Endothelial cell of umbilical vein (primary cell): ENCODE measurements at regions of chr3 and their contacts with region 1.

Region 1: GRCh38 chr3:57060089-57060829 is at the start of gene SPATA12:
- DNase-seq: peak; percentile 95
- H3K4me3 ChIP-seq: no peak within 1 kb of the TSS
- H3K27ac ChIP-seq: peak within 1 kb of the TSS; percentile 25
- H3K4me1 ChIP-seq: peaks cover 23% of the 10 kb centered on the region
- H3K27me3 ChIP-seq: no peaks in the 10 kb centered on the region
- CTCF ChIP-seq: no peak
- POLR2A ChIP-seq: no peak
- total RNA-seq, gene SPATA12: 0.14 TPM in 1 of 2 replicates, not detected in the other

Region 2: GRCh38 chr3:56682462-56683121 is 377.7 kb before region 1 on chr3:
- CTCF ChIA-PET with region 1: no interaction called
- POLR2A ChIA-PET with region 1: no interaction called
- dilution Hi-C with region 1: no loop called
- intact Hi-C with region 1: no loop called
- DNase-seq: peak; percentile 76
- H3K4me3 ChIP-seq: peak overlapping the region; percentile 40 to 85 (median 76)
- H3K27ac ChIP-seq: peak overlapping the region; percentile 82
- H3K4me1 ChIP-seq: peaks cover 14% of the 10 kb centered on the region
- H3K27me3 ChIP-seq: no peaks in the 10 kb centered on the region
- CTCF ChIP-seq: peak in 1 of 2 donors; percentile 9
- POLR2A ChIP-seq: peak; percentile 86

Region 3: GRCh38 chr3:56702490-56703315 is 357.6 kb before region 1 on chr3:
- CTCF ChIA-PET with region 1: no interaction called
- POLR2A ChIA-PET with region 1: no interaction called
- dilution Hi-C with region 1: no loop called
- intact Hi-C with region 1: no loop called
- DNase-seq: peak; percentile 66
- H3K4me3 ChIP-seq: no peak overlapping the region
- H3K27ac ChIP-seq: no peak overlapping the region
- H3K4me1 ChIP-seq: no peaks in the 10 kb centered on the region
- H3K27me3 ChIP-seq: no peaks in the 10 kb centered on the region
- CTCF ChIP-seq: peak; percentile 56 to 61
- POLR2A ChIP-seq: no peak

Region 4: GRCh38 chr3:57007513-57008460 is 52.5 kb before region 1 on chr3:
- CTCF ChIA-PET with region 1: interaction called, 4 read pairs
- POLR2A ChIA-PET with region 1: no interaction called
- dilution Hi-C with region 1: no loop called
- intact Hi-C with region 1: loop called (anchors 5 kb)
- DNase-seq: peak; percentile 77
- H3K4me3 ChIP-seq: no peak overlapping the region
- H3K27ac ChIP-seq: peak overlapping the region; percentile 9
- H3K4me1 ChIP-seq: peaks cover 16% of the 10 kb centered on the region
- H3K27me3 ChIP-seq: no peaks in the 10 kb centered on the region
- CTCF ChIP-seq: no peak
- POLR2A ChIP-seq: no peak

Region 5: GRCh38 chr3:57078344-57078634 is 18.0 kb after region 1 on chr3:
- CTCF ChIA-PET with region 1: interaction called, 9 read pairs
- POLR2A ChIA-PET with region 1: interaction called, 3 read pairs
- dilution Hi-C with region 1: no loop called
- intact Hi-C with region 1: loop called (anchors 2 kb)
- DNase-seq: peak; percentile 45
- H3K4me3 ChIP-seq: peak overlapping the region in 2 of 3 experiments; percentile 63 to 65
- H3K27ac ChIP-seq: no peak overlapping the region
- H3K4me1 ChIP-seq: peaks cover 22% of the 10 kb centered on the region
- H3K27me3 ChIP-seq: peaks cover 2 to 3% of the 10 kb centered on the region in 2 experiments
- CTCF ChIP-seq: no peak
- POLR2A ChIP-seq: no peak

Region 6: DNA sequence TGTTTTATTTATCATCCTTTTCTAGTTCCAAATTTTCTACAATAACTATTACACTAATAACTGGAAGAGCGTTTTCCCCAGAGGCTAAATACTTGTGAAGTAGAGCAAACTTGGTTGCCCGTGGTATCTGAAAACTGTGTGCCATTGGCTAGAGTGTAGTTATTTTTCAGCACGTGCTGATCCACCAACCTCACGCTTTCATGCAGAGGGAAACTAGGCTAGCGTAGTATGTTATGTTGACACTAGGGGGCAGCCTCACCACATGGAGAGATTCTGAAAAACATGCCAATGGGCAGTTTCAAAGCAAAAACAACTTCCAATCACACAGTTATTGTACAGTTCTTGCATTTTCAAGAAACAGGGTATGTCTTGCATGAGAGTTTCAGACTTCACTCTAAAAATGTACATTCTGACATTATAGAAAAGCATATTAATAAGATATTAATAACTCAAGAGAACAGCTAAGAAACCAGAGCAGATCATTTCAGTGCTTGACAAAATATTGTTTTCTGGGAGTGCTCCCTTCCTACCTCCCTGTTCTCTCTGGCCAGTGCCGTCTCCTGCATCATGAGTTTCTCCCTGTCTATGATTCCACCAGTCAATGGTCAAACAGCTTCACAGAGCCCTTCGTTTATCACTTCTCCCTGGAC is 39.9 kb after region 1 on chr3:
- CTCF ChIA-PET with region 1: no interaction called
- POLR2A ChIA-PET with region 1: no interaction called
- dilution Hi-C with region 1: no loop called
- intact Hi-C with region 1: no loop called
- DNase-seq: peak; percentile 83
- H3K4me3 ChIP-seq: no peak overlapping the region
- H3K27ac ChIP-seq: no peak overlapping the region
- H3K4me1 ChIP-seq: peaks cover 6% of the 10 kb centered on the region
- H3K27me3 ChIP-seq: no peaks in the 10 kb centered on the region
- CTCF ChIP-seq: peak; percentile 77 to 80
- POLR2A ChIP-seq: no peak